MCF 10A (cell line): ENCODE measurements at regions of chr9 and their contacts with region 1.

Region 1: GRCh38 chr9:23842565-23843129 is 16.6 kb upstream of the ELAVL2 start:
- DNase-seq: no peak
- H3K4me3 Mint-ChIP-seq: no peak overlapping the region
- H3K27ac Mint-ChIP-seq: no peak overlapping the region
- H3K4me1 Mint-ChIP-seq: no peaks in the 10 kb centered on the region
- H3K27me3 Mint-ChIP-seq: peaks cover 39% of the 10 kb centered on the region
- CTCF ChIP-seq: no peak

Region 2: GRCh38 chr9:23219471-23219870 is 623.2 kb before region 1 on chr9:
- CTCF ChIA-PET with region 1: no interaction called
- POLR2A ChIA-PET with region 1: no interaction called
- intact Hi-C with region 1: loop called (anchors 10 kb)
- DNase-seq: no peak
- H3K4me3 Mint-ChIP-seq: no peak overlapping the region
- H3K27ac Mint-ChIP-seq: no peak overlapping the region
- H3K4me1 Mint-ChIP-seq: no peaks in the 10 kb centered on the region
- H3K27me3 Mint-ChIP-seq: peaks cover 18% of the 10 kb centered on the region
- CTCF ChIP-seq: no peak

Region 3: GRCh38 chr9:23621188-23621587 is 221.5 kb before region 1 on chr9:
- CTCF ChIA-PET with region 1: no interaction called
- POLR2A ChIA-PET with region 1: no interaction called
- intact Hi-C with region 1: no loop called
- DNase-seq: peak; percentile 24
- H3K4me3 Mint-ChIP-seq: no peak overlapping the region
- H3K27ac Mint-ChIP-seq: no peak overlapping the region
- H3K4me1 Mint-ChIP-seq: peaks cover 10% of the 10 kb centered on the region
- H3K27me3 Mint-ChIP-seq: no peaks in the 10 kb centered on the region
- CTCF ChIP-seq: no peak

Region 4: DNA sequence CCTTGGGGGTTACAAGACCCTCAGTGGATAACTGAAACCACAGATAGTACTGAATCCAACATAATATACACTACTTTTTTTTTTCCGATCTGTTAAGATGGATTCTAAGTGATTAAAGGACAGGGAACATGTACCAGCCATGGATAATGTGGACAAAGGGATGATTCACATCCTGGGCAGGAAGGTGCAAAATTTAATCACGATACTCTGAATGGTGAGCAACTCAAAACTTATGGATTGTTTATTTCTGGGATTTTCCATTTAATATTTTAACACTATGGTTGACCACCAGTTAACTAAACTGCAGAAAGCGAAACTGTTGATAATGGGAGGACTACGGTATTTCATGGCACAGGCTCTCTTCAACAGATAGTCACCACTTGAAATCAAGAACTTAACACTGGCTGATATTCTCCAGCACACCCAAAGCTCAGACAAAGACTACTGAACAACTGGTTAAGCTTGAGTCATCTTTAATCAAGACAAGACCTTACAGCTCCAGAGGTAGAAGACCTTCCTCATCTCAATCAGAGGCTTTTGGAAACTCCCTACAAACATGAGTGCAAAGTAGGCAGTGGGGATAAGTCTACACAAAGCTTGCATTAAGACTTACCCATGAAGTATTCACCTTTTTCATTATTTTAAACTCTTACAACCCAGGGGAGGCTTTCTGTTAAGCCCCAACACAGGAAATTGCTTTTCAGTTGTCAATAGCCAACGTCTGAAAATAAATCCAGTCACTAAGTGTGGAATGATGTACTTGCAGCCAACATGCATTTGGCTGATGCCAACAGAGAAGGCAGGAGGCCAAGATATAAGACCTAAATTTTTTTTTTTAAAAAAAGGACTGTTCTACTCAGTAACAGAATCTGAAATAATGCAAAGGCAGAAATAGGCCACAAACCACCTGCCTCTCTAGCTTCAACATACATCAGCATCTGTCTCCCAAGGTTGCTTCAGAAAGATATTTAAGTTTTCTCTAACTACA is 95.3 kb before region 1 on chr9:
- CTCF ChIA-PET with region 1: no interaction called
- POLR2A ChIA-PET with region 1: no interaction called
- intact Hi-C with region 1: no loop called
- DNase-seq: no peak
- H3K4me3 Mint-ChIP-seq: peak overlapping the region; percentile 57
- H3K27ac Mint-ChIP-seq: peak overlapping the region; percentile 57
- H3K4me1 Mint-ChIP-seq: peaks cover 15% of the 10 kb centered on the region
- H3K27me3 Mint-ChIP-seq: no peaks in the 10 kb centered on the region
- CTCF ChIP-seq: no peak

Region 5: DNA sequence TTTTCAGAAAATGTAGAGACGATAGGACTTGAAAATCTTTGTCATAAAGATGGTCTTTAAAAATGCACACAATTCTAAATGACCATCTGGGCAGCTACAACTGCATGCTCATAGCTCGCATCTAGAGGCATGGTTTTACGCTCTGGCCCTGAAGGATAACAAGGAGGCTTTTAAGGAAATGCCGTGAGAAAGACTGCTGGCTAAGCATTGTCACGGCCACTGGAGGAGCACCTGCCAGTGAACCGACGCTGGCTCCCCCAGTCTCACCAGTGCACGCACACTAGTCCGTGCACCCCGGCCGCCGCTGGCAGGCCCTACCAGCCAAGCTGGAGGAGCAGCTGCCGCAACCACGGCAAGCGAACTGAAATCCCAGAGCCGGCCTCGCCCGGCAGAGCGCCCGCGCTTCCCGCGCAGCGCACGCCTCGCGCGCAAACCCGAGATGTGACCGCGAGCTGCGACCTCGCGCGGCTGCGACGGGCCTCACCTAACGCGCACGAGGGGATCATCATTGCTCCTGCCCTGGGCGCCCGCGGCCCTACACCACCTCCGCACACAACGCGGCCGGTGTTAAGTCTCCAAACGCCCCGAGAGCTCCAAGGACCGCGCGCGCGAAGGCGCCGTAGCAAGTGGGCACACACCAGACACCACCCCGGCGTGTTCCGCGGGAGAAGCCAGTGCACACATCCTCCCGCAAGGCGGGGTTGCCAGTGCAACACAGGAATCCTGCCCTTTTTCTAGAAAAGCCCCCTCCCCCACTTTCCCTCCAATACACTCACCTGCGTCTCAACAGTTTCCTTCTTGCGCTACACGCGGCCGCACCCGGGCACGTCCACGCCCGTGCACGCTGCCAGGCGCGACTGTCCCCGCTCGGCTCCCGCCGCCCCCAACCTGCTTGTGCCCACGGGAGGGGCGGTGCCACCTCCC is 21.9 kb before region 1 on chr9:
- CTCF ChIA-PET with region 1: no interaction called
- POLR2A ChIA-PET with region 1: no interaction called
- intact Hi-C with region 1: no loop called
- DNase-seq: peak; percentile 18
- H3K4me3 Mint-ChIP-seq: peak overlapping the region; percentile 89
- H3K27ac Mint-ChIP-seq: no peak overlapping the region
- H3K4me1 Mint-ChIP-seq: peaks cover 10% of the 10 kb centered on the region
- H3K27me3 Mint-ChIP-seq: no peaks in the 10 kb centered on the region
- CTCF ChIP-seq: no peak

Region 6: DNA sequence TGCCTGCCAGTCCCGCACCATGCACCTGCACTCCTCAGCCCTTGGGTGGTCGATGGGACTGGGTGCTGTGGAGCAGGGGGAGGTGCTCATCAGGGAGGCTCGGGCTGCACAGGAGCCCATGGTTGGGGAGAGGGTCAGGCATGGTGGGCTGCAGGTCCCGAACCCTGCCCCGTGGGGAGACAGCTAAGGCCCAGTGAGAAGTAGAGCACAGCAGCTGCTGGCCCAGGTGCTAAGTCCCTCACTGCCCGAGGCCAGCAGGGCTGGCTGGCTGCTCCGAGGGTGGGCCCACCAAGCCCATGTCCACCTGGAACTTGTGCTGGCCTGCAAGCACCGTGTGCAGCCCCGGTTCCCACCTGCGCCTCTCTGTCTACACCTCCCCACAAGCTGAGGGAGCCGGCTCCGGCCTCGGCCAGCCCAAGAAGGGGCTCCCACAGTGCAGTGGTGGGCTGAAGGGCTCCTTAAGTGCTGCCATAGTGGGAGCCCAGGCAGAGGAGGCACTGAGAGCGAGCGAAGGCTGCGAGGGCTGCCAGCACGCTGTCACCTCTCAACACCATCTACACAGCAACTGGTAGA is 71.9 kb after region 1 on chr9:
- CTCF ChIA-PET with region 1: no interaction called
- POLR2A ChIA-PET with region 1: no interaction called
- intact Hi-C with region 1: no loop called
- DNase-seq: no peak
- H3K4me3 Mint-ChIP-seq: no peak overlapping the region
- H3K27ac Mint-ChIP-seq: no peak overlapping the region
- H3K4me1 Mint-ChIP-seq: no peaks in the 10 kb centered on the region
- H3K27me3 Mint-ChIP-seq: no peaks in the 10 kb centered on the region
- CTCF ChIP-seq: no peak